ENCODE measurements at regions of chrX and their contacts with region 1.

Region 1: DNA sequence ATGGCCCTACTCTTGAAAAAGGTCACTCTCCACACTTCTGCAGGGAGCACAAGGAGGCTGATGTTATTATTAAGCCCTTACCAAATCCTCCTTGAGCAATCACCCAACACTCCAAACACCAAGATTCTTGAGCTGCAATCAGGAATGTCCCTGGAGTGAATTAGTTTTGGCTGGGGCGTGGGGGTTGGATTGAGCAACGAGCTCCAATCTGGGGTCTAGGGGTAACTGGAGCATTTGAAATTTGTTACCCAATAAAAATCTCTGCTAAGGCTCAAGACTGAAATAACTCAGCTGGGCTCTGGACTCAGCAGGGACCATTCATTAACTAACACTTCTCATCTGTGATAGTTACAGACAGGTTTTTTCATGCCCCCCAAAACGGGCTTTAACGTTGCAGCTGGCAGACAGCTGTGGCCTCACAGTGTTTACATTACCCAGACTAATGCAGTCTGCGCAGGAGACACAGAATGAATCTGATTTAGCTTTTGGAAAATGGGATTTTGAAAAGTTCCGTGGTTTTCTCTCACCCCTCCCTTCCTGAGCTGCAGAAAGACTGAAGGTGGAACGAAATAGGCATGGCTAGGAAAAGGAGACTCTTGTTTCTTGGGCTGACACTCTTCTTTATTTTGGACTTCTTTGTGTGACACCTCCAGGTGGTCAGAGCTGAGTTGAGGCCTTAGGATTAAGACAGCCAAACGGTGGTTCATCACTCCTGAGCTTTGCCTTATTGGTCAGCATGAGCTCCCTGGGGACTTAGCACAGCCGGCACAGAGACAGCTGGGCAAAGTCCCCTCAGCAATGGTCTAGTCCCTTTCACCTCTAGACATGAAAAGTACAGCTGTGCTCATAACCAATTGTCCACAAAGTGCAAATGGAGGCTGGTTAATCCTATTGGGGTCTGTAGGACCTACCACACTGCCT is 26.6 kb downstream of the PLAC1 start:
- DNase-seq: peak; percentile 74
- H3K4me3 ChIP-seq: no peak overlapping the region
- H3K27ac ChIP-seq: peak overlapping the region; percentile 57
- H3K27me3 ChIP-seq: no peaks in the 10 kb centered on the region
- CTCF ChIP-seq: no peak

Region 2: DNA sequence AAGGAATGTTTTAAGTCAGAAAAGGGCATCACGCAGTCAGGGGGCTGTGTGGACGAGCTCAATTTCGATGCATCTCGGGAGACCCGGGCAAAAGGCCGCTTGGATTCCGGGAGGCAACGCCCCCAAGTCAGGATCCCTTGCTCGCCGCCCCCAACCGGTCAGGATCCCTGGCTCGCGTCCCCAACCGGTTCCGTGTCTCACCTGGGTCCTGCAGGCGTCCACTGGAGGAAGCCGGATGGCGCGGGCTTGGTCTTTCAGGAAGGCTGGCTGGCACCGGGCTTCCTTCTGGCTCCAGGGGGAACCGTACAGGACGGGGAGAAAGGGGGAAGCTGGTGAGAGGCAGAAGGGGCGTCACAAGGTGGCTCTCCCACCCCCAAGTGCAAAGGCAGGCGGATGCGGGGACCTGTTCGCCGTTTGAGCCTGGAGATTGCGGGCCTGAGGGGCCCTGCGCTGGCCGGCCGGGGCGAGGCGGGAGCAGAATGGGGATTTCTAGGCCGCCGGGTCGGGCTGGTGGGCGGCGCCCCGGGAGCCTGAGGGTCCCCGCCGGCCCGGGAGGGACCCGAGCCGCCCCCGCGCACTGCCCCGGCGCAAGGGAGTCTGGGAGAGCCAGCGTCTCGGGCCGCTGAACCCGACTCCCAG is 87.1 kb before region 1 on chrX:
- CTCF ChIA-PET with region 1: no interaction called
- POLR2A ChIA-PET with region 1: interaction called, 11 read pairs
- DNase-seq: no peak
- H3K4me3 ChIP-seq: no peak overlapping the region
- H3K27ac ChIP-seq: peak overlapping the region; percentile 52
- H3K27me3 ChIP-seq: no peaks in the 10 kb centered on the region
- CTCF ChIP-seq: no peak

Region 3: GRCh38 chrX:134670134-134670924 is 38.6 kb after region 1 on chrX:
- CTCF ChIA-PET with region 1: interaction called, 4 read pairs
- POLR2A ChIA-PET with region 1: interaction called, 30 read pairs
- DNase-seq: peak; percentile 61
- H3K4me3 ChIP-seq: no peak overlapping the region
- H3K27ac ChIP-seq: peak overlapping the region; percentile 97
- H3K27me3 ChIP-seq: no peaks in the 10 kb centered on the region
- CTCF ChIP-seq: 0 out of 2 replicates have a peak, but pooled peaks have one; percentile 14

Measured in AG04450 (cell line).